AG04449 (cell line): ENCODE measurements at regions of chr19 and their contacts with region 1.

Region 1: GRCh38 chr19:42283143-42284065 is 14.4 kb downstream of the CIC start:
- DNase-seq: no peak
- H3K4me3 ChIP-seq: peak overlapping the region; percentile 69
- CTCF ChIP-seq: no peak

Region 2: GRCh38 chr19:42113641-42114348 is 169.6 kb before region 1 on chr19:
- CTCF ChIA-PET with region 1: interaction called, 13 read pairs
- POLR2A ChIA-PET with region 1: interaction called, 3 read pairs
- DNase-seq: peak; percentile 91
- H3K4me3 ChIP-seq: peak overlapping the region; percentile 10; the same call in 1 of the 2 replicates
- CTCF ChIP-seq: peak; percentile 32

Region 3: DNA sequence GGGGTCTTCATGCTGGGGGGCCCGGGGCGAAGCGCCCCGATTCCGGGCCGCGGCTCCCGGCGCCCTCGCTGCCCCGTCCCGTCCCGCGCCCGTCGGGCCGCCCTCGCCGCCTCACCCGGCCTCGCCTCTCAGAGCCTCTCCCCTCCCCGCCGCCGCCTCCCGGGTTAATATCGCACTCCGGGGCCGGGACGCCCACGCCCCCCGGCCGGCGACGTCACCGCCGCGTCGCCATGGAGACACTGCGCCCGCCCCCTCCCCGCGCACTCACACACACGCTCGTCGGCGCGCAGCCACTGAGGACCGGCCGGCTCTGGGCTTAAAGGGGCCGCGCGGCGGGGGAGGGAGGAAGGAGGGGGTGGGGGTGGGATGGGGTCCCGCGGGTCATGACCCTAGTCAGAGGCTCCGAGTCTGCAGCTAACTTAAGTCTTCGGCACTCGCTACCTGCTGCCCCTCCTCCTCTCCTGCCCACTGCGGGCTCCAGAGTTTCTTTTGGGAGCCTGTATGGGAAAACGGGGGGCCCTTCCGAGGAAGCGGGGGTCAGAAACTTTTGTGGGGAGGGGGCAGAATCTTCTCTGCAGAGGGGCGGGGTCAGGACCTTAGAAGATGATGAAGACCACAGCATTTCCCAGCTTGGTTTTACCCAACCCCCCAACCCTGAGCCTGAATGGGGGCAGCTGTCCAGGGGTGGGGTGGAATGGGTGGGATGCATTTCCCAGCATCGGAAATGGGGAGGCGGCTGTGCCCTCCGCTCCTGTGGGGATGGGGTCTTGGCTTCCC is 28.2 kb before region 1 on chr19 and contains the start of gene ERF:
- CTCF ChIA-PET with region 1: interaction called, 258 read pairs
- POLR2A ChIA-PET with region 1: interaction called, 5 read pairs
- DNase-seq: no peak
- H3K4me3 ChIP-seq: peak within 1 kb of the TSS; percentile 96
- CTCF ChIP-seq: no peak

Region 4: GRCh38 chr19:42268704-42269477 is 14.5 kb before region 1 on chr19 and contains the start of gene CIC:
- CTCF ChIA-PET with region 1: interaction called, 49 read pairs
- POLR2A ChIA-PET with region 1: interaction called, 20 read pairs
- DNase-seq: peak; percentile 100
- H3K4me3 ChIP-seq: peak within 1 kb of the TSS; percentile 96
- CTCF ChIP-seq: no peak

Region 5: DNA sequence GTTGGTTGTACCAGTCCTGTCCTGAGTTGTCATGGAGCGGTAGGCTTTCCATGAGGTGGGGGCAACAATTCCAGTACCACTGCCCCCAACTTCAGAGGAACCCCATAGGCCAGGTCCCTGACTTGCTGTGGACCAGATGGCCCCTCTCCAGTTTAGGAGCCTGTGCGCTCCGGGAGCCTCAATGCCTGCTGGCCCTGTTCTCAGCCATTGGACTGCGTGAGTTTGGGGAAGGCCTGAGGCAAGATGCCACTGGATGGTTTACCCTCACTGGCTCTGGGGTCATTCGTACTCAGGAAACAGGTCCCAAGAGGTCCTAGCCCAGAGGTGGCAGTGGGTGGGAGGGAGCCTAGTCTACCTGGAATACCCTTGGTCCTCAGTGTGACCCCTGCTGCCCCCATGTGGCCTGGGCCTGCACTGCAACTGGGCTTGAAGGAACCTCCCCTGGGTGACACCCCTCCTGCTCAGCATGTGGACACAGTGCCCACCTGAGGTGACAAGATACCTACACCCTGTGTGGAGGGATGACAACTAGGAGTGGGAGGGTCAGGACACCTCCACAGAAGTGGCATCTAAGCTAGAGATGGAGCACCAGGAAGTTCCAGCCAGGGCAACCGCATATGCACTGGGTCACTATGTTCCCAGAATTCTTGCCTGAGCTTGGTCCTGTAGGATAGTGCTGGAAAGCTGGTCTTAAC is 12.6 kb after region 1 on chr19:
- CTCF ChIA-PET with region 1: interaction called, 48 read pairs
- POLR2A ChIA-PET with region 1: no interaction called
- DNase-seq: no peak
- H3K4me3 ChIP-seq: no peak overlapping the region
- CTCF ChIP-seq: peak; percentile 98

Region 6: GRCh38 chr19:42420055-42420544 is 136.7 kb after region 1 on chr19:
- CTCF ChIA-PET with region 1: no interaction called
- POLR2A ChIA-PET with region 1: no interaction called
- DNase-seq: no peak
- H3K4me3 ChIP-seq: no peak overlapping the region
- CTCF ChIP-seq: peak; percentile 60

Region 7: DNA sequence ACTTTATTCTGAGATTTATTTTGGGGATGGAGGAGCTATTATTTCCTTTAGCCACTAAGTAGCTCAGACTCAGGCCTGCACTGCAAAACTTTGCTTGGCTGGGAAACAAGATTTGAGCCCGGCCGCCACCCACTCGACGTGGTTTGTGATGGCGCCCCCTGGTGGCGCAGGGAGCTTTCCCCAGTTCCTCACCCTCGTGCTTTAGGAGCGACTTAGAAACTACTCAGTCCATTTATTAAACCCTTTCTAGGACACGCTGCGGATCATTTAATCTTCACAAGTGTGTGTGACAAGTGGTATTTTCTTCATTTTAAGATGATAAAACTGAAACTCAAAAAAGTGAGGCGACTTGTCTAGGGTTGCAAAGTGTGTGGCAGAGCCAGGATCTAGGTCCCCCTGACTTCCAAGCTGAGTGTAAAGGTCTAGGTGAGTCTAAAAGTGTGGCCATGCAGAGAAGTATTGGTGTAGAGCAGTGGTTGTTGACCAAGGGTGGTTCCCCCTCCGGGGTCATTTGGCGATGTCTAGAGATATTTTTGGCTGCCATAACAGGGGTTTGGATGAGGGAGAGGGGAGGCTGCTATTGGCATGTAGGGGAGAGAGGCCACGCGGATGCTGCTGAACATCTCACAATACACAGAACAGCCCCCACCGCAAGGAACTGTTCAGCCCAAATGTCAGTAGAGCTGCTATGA is 157.1 kb after region 1 on chr19:
- CTCF ChIA-PET with region 1: no interaction called
- POLR2A ChIA-PET with region 1: no interaction called
- DNase-seq: no peak
- H3K4me3 ChIP-seq: no peak overlapping the region
- CTCF ChIP-seq: peak; percentile 82